MCF 10A (cell line): ENCODE measurements at regions of chr2 and their contacts with region 1.

Region 1: GRCh38 chr2:113203901-113204519 is 30.2 kb downstream of the PSD4 start:
- DNase-seq: peak; percentile 81
- H3K4me3 Mint-ChIP-seq: no peak overlapping the region
- H3K27ac Mint-ChIP-seq: peak overlapping the region; percentile 25
- H3K4me1 Mint-ChIP-seq: peaks cover 12% of the 10 kb centered on the region
- H3K27me3 Mint-ChIP-seq: no peaks in the 10 kb centered on the region
- CTCF ChIP-seq: peak; percentile 92

Region 2: DNA sequence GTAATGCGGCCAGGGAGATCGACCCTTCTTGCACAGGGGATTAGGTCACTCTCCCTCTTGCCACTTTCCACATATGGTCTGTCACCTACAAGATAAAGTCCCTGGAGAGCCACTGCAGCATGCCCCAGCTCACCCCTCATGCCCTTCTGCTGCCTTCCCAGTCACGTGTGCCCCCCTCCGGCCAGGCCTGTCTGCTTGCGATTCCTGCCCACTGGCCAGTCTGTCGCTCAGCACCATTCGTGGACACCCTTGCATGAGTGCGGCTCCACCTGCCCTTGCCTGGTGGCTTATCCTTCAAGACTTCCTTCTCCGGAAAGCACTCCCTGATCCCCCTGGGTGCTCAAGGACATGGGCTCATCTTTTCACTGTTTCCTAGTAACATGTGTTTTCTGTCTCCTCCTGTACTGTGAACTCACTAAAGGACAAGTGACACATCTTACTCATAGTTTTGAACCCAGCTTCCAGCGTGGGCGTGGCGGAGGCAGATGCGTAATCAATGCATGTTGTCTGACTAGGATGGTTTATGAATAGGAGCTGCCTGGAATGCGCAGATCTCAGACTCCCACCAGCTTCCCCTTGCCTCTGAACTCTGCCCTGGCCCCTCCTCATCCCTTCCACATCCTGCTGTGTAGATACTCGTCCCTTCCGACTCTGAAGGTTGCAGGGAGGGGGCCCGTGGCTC is 491.0 kb before region 1 on chr2:
- CTCF ChIA-PET with region 1: no interaction called
- POLR2A ChIA-PET with region 1: no interaction called
- intact Hi-C with region 1: no loop called
- DNase-seq: peak; percentile 42
- H3K4me3 Mint-ChIP-seq: no peak overlapping the region
- H3K27ac Mint-ChIP-seq: no peak overlapping the region
- H3K4me1 Mint-ChIP-seq: peaks cover 7% of the 10 kb centered on the region
- H3K27me3 Mint-ChIP-seq: no peaks in the 10 kb centered on the region
- CTCF ChIP-seq: no peak

Region 3: DNA sequence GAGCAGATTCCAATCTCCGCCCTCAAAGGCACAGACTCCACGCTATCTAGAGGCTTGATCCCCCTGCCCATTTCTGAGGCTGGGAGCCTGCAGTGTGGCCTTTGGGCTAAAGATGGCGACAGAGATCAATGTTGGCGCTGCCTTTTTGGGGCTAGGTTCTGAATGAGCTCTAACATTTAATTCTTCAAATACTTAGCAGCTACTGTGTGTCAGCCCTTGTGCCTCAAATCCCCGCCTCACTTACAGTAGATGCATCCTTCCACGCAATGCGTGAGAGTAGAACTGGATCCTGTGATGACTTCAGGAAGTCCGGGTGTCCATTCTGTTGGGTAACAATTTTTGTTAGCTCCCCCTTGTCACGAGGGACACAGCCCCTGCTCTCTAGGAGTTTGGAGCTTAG is 123.9 kb before region 1 on chr2:
- CTCF ChIA-PET with region 1: interaction called, 267 read pairs
- POLR2A ChIA-PET with region 1: interaction called, 52 read pairs
- intact Hi-C with region 1: loop called (anchors 1 kb)
- DNase-seq: peak; percentile 62
- H3K4me3 Mint-ChIP-seq: no peak overlapping the region
- H3K27ac Mint-ChIP-seq: no peak overlapping the region
- H3K4me1 Mint-ChIP-seq: peaks cover 36% of the 10 kb centered on the region
- H3K27me3 Mint-ChIP-seq: no peaks in the 10 kb centered on the region
- CTCF ChIP-seq: peak; percentile 86

Region 4: DNA sequence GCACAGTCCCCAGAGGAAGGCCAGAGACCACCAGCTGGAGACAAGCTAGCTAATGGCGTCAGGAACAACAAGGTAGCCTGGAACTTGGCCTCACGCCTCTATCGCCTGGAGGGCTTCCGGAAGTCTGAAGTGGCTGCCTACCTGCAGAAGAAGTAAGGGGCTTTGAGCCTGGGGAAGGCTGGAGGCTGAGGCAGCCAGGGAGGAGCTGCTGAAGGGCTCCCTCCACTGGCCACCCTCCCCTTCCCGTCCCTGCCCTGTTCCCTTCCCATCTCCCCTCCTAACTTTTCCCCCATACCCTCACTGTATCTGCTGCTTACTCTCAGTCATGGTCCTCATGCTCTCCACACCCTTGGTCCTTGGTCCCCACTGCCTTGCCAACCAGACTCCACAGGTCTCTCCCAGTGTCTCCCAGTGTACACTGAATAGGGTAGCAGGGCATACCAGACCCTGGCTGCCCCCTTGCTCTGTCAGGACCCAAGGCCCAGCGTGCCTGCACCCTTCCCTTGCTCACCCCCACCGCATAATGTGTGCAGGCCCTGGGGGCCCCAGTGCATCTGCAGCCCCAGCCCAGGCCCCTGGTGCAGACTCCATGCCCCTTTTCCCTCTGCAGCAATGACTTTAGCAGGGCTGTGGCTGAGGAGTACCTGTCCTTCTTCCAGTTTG is 11.4 kb before region 1 on chr2:
- CTCF ChIA-PET with region 1: interaction called, 11 read pairs
- POLR2A ChIA-PET with region 1: no interaction called
- intact Hi-C with region 1: no loop called
- DNase-seq: no peak
- H3K4me3 Mint-ChIP-seq: no peak overlapping the region
- H3K27ac Mint-ChIP-seq: no peak overlapping the region
- H3K4me1 Mint-ChIP-seq: no peaks in the 10 kb centered on the region
- H3K27me3 Mint-ChIP-seq: no peaks in the 10 kb centered on the region
- CTCF ChIP-seq: no peak

Region 5: GRCh38 chr2:113219889-113220641 is 16.1 kb after region 1 on chr2:
- CTCF ChIA-PET with region 1: interaction called, 30 read pairs
- POLR2A ChIA-PET with region 1: interaction called, 4 read pairs
- intact Hi-C with region 1: no loop called
- DNase-seq: peak; percentile 74
- H3K4me3 Mint-ChIP-seq: no peak overlapping the region
- H3K27ac Mint-ChIP-seq: peak overlapping the region; percentile 40
- H3K4me1 Mint-ChIP-seq: peaks cover 15% of the 10 kb centered on the region
- H3K27me3 Mint-ChIP-seq: no peaks in the 10 kb centered on the region
- CTCF ChIP-seq: no peak

Region 6: DNA sequence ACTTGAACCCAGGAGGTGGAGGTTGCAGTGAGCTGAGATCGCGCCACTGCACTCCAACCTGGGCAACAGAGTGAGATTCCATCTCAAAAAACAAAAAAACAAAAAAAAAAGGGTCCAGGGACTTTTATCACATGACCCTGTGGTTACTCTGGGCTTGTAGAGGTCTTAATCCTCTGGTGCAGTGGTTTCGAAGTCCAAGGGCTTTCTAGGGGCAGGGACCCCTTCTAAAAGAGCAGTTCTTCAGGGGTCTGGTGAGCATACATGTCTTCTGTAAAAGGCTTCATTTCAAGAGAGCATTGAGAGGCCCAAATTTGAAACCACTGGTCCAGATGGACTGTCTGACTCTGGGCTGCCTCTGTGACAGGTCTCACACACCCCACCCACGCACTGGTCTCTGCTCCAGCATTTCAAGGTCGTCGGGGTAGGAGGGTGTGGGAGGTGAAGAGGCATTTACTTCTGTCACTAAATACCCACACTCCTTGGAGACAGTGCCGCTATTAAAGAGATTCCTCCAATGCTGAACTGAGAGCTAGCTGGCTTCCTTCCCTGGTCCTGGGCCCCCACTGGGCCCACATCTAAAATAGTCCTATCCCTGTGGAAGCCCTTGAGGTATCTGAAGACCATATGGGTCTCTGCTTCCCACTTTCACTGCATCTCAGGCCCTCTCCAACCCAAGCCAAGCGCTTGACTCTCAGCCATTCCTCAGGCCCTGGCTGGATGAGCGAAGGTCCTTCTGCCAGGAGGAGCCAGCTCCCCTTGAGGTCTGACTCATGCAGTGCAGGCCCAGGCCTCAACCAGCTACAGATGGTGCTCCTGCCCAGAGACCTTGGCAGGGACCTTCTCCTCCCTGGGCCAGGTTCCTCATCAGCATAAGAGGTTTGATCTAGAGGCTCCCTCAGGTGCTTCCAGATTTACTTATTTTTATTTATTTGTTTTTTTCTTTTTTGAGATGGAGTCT is 29.9 kb after region 1 on chr2:
- CTCF ChIA-PET with region 1: interaction called, 505 read pairs
- POLR2A ChIA-PET with region 1: interaction called, 75 read pairs
- intact Hi-C with region 1: no loop called
- DNase-seq: peak; percentile 43
- H3K4me3 Mint-ChIP-seq: no peak overlapping the region
- H3K27ac Mint-ChIP-seq: no peak overlapping the region
- H3K4me1 Mint-ChIP-seq: peaks cover 14% of the 10 kb centered on the region
- H3K27me3 Mint-ChIP-seq: no peaks in the 10 kb centered on the region
- CTCF ChIP-seq: no peak

Region 7: GRCh38 chr2:113248997-113249770 is 45.2 kb after region 1 on chr2:
- CTCF ChIA-PET with region 1: interaction called, 505 read pairs
- POLR2A ChIA-PET with region 1: interaction called, 5 read pairs
- intact Hi-C with region 1: loop called (anchors 2 kb)
- DNase-seq: peak; percentile 86
- H3K4me3 Mint-ChIP-seq: no peak overlapping the region
- H3K27ac Mint-ChIP-seq: no peak overlapping the region
- H3K4me1 Mint-ChIP-seq: peaks cover 15% of the 10 kb centered on the region
- H3K27me3 Mint-ChIP-seq: no peaks in the 10 kb centered on the region
- CTCF ChIP-seq: peak; percentile 92

Region 8: GRCh38 chr2:113370478-113371091 is 166.6 kb after region 1 on chr2:
- CTCF ChIA-PET with region 1: interaction called, 108 read pairs
- POLR2A ChIA-PET with region 1: interaction called, 3 read pairs
- intact Hi-C with region 1: loop called (anchors 1 kb)
- DNase-seq: peak; percentile 80
- H3K4me3 Mint-ChIP-seq: no peak overlapping the region
- H3K27ac Mint-ChIP-seq: no peak overlapping the region
- H3K4me1 Mint-ChIP-seq: peaks cover 7% of the 10 kb centered on the region
- H3K27me3 Mint-ChIP-seq: no peaks in the 10 kb centered on the region
- CTCF ChIP-seq: peak; percentile 76